ENCODE measurements at regions of chr1 and their contacts with region 1.

Region 1: GRCh38 chr1:168082008-168082876 is 54.5 kb downstream of the GPR161 start:
- DNase-seq: peak; percentile 75
- H3K4me3 ChIP-seq: no peak overlapping the region; a peak in 1 of 4 replicates
- H3K27ac ChIP-seq: peak overlapping the region in 1 of 2 experiments; percentile 24; a peak in 3 of 4 replicates
- H3K4me1 ChIP-seq: peaks cover 7 to 9% of the 10 kb centered on the region in 2 experiments; a peak in 3 of 4 replicates
- H3K27me3 ChIP-seq: no peaks in the 10 kb centered on the region
- CTCF ChIP-seq: peak; percentile 83
- EP300 ChIP-seq: no peak
- RAD21 ChIP-seq: peak; percentile 86

Region 2: DNA sequence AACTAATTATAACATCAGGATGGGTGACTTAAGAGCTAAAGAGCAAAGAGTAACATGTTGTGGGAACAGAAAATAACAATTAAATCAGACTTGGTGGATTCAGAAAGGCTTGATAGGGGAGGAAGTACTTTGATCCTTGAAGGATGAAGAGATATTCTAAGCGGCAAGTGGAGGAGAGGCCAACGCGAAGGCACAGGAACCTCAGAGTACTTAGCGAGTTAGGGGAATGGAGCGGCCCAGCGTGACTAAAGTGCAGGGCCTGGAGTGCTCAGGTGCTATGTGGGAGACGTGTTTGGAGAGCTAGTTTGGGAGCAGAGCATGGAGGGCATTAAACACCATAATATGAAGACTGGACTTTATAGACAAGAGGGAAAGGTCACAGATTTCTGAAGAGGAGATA is 232.6 kb before region 1 on chr1:
- CTCF ChIA-PET with region 1: no interaction called
- POLR2A ChIA-PET with region 1: no interaction called
- DNase-seq: no peak
- H3K4me3 ChIP-seq: no peak overlapping the region
- H3K27ac ChIP-seq: no peak overlapping the region
- H3K4me1 ChIP-seq: no peaks in the 10 kb centered on the region
- H3K27me3 ChIP-seq: no peaks in the 10 kb centered on the region
- CTCF ChIP-seq: no peak
- EP300 ChIP-seq: no peak
- RAD21 ChIP-seq: no peak

Region 3: DNA sequence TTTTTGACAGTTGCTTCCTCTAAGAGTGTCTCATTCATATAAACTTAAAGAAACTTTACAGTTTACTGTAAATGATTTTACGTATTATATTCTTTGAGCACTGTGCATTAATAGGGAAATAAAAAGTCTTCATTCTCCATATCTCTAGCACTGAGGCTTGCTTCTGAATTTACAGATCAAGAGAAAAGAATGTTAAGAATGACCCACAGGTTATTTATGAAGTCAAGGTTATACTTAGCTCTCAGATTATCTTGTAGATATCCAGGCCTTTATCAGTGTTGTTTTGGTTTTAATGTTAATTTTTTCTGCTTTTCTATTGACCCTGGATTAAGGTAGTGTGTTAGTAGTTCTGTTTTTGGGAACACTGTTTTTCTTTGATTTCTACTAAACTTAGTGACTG is 36.9 kb before region 1 on chr1:
- CTCF ChIA-PET with region 1: interaction called, 28 read pairs
- POLR2A ChIA-PET with region 1: interaction called, 4 read pairs
- DNase-seq: no peak
- H3K4me3 ChIP-seq: no peak overlapping the region
- H3K27ac ChIP-seq: no peak overlapping the region
- H3K4me1 ChIP-seq: no peaks in the 10 kb centered on the region; a peak in 1 of 4 replicates
- H3K27me3 ChIP-seq: no peaks in the 10 kb centered on the region
- CTCF ChIP-seq: no peak
- EP300 ChIP-seq: no peak
- RAD21 ChIP-seq: no peak

Region 4: DNA sequence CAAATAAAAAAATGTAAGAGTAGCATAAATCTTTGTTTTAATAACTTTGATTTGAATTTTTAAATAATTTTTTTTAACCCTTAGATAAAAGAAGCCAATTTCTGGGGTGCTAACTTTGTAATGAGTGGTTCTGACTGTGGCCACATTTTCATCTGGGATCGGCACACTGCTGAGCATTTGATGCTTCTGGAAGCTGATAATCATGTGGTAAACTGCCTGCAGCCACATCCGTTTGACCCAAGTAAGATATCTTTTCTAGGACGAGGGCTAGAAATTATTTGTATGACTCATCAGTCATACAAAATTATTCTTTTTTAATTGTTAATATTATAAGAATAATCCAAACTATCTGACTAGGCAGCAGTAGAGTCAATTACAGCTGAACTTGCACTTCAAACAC is 16.7 kb before region 1 on chr1:
- CTCF ChIA-PET with region 1: interaction called, 86 read pairs
- POLR2A ChIA-PET with region 1: no interaction called
- DNase-seq: no peak
- H3K4me3 ChIP-seq: no peak overlapping the region
- H3K27ac ChIP-seq: no peak overlapping the region
- H3K4me1 ChIP-seq: no peaks in the 10 kb centered on the region
- H3K27me3 ChIP-seq: no peaks in the 10 kb centered on the region
- CTCF ChIP-seq: no peak
- EP300 ChIP-seq: no peak
- RAD21 ChIP-seq: no peak

Region 5: GRCh38 chr1:168100315-168101002 is 18.2 kb after region 1 on chr1:
- CTCF ChIA-PET with region 1: interaction called, 48 read pairs
- POLR2A ChIA-PET with region 1: no interaction called
- DNase-seq: no peak
- H3K4me3 ChIP-seq: no peak overlapping the region
- H3K27ac ChIP-seq: no peak overlapping the region
- H3K4me1 ChIP-seq: peaks cover 0 to 17% of the 10 kb centered on the region in 2 experiments; a peak in 1 of 4 replicates
- H3K27me3 ChIP-seq: no peaks in the 10 kb centered on the region
- CTCF ChIP-seq: no peak
- EP300 ChIP-seq: no peak
- RAD21 ChIP-seq: no peak

Region 6: DNA sequence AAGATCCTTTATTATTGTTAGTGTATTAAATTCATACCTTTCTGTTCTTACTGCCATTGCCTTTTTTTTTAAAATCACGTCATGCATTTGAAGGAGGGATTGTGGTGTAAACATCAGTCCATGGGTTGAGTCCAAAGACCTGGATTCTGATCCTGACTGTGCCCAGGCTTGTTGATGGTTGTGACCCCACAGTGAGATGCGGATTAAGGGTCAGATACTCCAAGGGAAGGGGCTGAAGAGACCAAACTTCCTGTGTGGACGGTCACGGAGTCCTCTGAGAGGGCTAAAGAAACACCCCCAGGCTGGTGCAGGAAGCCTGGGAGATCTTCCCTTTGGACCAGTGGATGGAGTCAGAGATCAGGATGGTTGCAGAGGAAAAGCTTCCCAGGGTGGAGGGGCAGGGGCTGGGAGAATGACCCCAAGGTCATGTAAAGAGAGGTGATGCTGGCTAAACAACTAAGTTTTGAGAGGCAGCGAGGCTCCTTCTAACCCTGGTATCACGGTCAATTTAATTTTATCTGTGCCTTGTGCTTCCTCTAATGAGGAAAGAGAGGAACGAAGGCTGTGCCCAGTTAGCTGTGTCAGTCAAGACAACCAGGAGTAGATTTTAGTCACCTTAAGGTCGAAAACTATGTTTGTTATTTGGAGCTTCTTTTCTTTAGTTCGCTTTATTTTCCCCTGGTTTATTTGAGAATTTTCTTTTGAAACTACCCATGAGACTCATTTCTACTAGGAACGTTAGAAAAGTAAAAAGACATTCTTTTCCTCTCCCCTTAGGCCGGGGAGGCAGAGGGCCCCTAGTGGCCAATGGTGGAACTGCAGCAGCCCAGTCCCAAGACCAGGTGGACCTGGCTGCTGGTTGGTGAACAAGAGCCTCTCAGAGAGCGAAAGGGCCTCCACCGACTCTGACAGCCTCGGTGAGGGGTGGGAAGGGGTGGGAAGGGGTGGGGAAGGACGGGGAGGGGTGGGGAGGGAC is 63.2 kb after region 1 on chr1:
- CTCF ChIA-PET with region 1: interaction called, 15 read pairs
- POLR2A ChIA-PET with region 1: no interaction called
- DNase-seq: peak; percentile 93
- H3K4me3 ChIP-seq: peak overlapping the region in 1 of 2 experiments; percentile 42; a peak in 1 of 4 replicates
- H3K27ac ChIP-seq: no peak overlapping the region
- H3K4me1 ChIP-seq: no peaks in the 10 kb centered on the region
- H3K27me3 ChIP-seq: no peaks in the 10 kb centered on the region
- CTCF ChIP-seq: peak; percentile 96
- EP300 ChIP-seq: no peak
- RAD21 ChIP-seq: peak; percentile 62